Gastrocnemius medialis (tissue), 4 donors: ENCODE measurements at regions of chr2 and their contacts with region 1.

Region 1: DNA sequence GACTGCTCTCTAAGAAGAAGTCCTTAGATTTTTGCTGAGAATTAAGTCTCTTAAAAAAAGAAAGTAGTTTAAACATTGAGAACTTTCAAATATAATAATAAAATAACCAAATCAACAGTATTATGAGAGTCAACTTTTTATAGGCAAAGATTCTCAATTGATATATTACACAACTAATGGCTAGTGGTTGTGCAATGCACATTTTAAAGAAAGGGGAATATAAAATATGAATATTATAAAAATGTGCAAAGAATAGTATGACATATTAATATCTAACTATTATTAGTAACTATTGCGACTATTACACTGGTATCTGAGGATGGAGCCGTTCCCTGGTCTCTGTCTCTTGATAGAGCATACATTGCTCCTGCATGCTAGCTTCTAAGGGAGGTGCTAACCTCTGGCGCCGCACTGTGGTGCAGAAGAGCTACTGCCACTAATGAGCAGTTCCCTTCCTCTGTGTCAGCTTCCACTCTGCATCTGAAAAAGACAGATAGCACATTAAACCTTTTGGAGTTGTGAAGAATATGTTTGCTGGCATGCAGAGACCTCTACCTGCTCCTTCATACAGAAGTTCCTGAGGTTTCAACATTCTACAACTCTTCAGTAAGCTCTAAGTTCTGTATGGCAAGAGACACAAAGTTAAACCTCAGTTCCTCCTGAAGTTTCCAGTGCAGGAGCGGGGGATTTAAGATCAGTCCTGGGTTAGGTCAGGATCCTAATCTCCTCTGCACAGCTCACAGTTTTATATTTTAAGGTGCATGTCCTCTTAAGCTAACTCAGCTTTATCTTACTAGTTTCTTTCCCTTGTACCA is 3.5 kb upstream of the SLC9A2 start:
- DNase-seq: peak; percentile 31 to 51
- ATAC-seq: peak; percentile 53 to 61
- H3K4me3 ChIP-seq: no peak overlapping the region
- H3K27ac ChIP-seq: no peak overlapping the region
- H3K4me1 ChIP-seq: peaks cover 10 to 16% of the 10 kb centered on the region in 2 donors
- H3K27me3 ChIP-seq: no peaks in the 10 kb centered on the region
- CTCF ChIP-seq: peak; percentile 62 to 89 (median 79)
- POLR2A ChIP-seq: no peak

Region 2: GRCh38 chr2:102520028-102520427 is 95.8 kb before region 1 on chr2:
- in situ Hi-C with region 1: no loop called
- intact Hi-C with region 1: loop called (anchors 2 kb)
- DNase-seq: no peak
- ATAC-seq: peak; percentile 36 to 76
- H3K4me3 ChIP-seq: no peak overlapping the region
- H3K27ac ChIP-seq: no peak overlapping the region
- H3K4me1 ChIP-seq: no peaks in the 10 kb centered on the region
- H3K27me3 ChIP-seq: no peaks in the 10 kb centered on the region
- CTCF ChIP-seq: peak; percentile 25 to 59 (median 58)
- POLR2A ChIP-seq: no peak

Region 3: GRCh38 chr2:102604746-102605145 is 11.1 kb before region 1 on chr2:
- in situ Hi-C with region 1: no loop called
- intact Hi-C with region 1: loop called (anchors 2 kb)
- DNase-seq: peak; percentile 84 to 90
- ATAC-seq: peak; percentile 93 to 94
- H3K4me3 ChIP-seq: no peak overlapping the region
- H3K27ac ChIP-seq: peak overlapping the region; percentile 70 to 83 (median 77)
- H3K4me1 ChIP-seq: peaks cover 17 to 28% of the 10 kb centered on the region in 2 donors
- H3K27me3 ChIP-seq: no peaks in the 10 kb centered on the region
- CTCF ChIP-seq: no peak
- POLR2A ChIP-seq: no peak